AG04450 (cell line): ENCODE measurements at regions of chr10 and their contacts with region 1.

Region 1: DNA sequence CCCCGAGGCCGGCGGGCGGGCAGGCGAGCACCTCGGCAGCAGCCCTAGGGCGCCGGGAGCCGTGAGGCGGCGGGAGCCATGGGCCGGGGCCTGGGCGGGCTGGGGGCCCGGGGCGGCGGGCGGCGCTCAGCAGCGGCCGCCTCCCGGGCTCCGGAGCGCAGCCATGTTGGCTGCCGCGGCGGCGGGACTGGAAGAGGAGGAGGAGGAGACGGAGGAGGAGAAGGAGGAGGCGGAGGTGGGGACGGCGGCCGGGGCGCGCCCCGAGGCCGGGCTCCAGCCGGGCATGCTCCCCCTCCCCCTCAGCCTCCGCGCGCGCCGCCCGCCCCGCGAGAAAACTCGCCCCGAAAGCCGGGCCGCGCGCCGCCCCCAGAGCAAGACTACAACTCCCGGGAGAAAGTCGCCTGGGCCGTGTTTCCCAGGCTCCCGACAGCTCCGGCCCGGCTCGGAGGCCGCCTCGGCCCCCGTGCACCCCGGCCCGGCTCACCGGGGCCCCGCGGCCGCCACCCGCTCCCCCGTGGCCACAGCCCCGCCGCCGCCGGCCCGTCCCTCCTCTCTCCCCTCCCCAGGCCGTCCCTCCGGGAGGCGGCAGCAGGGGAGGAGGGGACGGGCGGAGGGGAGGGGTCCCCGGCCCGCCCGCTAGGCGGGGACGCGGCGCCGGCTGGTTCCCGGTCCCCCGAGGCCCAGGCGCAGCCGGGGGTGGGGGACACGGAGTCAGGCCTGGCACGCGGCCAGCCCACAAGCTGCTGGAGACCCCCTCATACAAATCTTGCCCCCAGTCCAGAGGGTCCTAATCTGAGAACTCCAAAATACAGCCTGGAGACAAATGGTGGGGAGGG is at the start of gene DLG5:
- DNase-seq: no peak
- H3K4me3 ChIP-seq: peak within 1 kb of the TSS; percentile 83
- H3K27ac ChIP-seq: peak within 1 kb of the TSS; percentile 34
- H3K27me3 ChIP-seq: no peaks in the 10 kb centered on the region
- CTCF ChIP-seq: no peak
- polyA plus RNA-seq, gene DLG5: 16.3 and 21.9 TPM in 2 replicates

Region 2: DNA sequence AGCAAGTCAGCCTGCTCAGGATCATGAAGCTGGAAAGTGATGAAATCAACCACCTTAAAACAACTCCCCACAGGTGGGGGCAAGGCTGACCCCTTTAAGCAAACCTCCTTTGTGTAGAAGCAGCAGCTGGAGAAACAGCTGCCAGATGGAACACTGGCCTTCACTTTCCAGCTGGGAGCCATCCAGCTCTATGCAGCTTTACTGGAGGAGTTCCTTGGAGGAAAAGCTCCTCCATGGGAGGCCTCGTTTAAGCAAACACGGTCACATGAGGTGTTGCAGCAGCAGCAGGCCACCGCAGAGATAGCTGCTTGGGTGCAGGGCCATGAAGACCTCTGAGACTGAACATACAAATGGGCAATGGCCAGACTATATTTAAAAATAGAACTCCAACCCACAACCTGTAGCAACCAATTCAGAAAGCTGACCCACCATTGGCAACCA is 12.8 kb after region 1 on chr10:
- CTCF ChIA-PET with region 1: interaction called, 8 read pairs
- POLR2A ChIA-PET with region 1: interaction called, 13 read pairs
- DNase-seq: peak; percentile 78
- H3K4me3 ChIP-seq: no peak overlapping the region
- H3K27ac ChIP-seq: peak overlapping the region; percentile 69
- H3K27me3 ChIP-seq: no peaks in the 10 kb centered on the region
- CTCF ChIP-seq: no peak

Region 3: GRCh38 chr10:77965294-77965693 is 38.5 kb after region 1 on chr10:
- CTCF ChIA-PET with region 1: no interaction called
- POLR2A ChIA-PET with region 1: no interaction called
- DNase-seq: peak; percentile 51
- H3K4me3 ChIP-seq: no peak overlapping the region
- H3K27ac ChIP-seq: peak overlapping the region; percentile 61
- H3K27me3 ChIP-seq: no peaks in the 10 kb centered on the region
- CTCF ChIP-seq: 0 out of 2 replicates have a peak, but pooled peaks have one; percentile 27